Calu3 (cell line): ENCODE measurements at regions of chr6 and their contacts with region 1.

Region 1: DNA sequence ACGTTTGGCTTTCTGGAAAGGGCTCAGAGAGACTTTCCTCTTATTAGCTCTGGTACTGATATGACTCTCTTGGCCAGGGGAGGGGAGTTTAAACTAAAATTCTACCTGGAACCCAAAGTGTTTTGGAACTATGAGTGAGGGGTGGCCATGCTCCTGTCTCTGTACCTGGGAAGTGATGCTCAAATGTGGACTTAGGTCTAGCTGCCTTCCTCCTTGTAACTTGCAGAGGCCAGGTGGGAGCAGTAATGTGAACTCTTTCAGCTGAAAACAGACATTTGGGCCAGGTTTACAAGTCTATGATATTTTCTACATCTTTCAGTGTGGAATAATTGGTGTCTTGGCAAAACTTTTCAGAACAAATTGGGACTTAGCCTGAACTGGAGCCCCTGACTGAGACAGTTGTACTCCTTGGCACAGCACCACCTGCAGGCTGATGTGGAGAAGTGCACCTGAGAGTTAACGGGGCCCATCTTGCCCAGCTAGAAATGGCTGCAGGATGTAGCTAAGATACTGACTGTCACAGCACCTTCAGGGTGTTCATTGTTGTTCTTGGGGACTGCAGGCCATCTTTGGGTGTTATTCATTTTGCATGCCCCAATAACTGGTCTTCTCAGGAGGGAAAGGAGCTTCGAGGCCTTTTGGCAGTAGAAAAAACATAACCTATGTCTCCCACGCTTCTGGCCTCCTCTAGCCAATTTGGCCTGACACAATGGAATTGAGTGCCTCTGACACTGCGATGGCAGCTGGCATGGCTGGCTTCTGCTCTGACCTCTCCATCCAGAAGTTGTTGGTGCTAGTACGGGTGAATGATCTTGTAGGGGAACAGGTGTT is 37.1 kb downstream of the CD109 start:
- DNase-seq: peak; percentile 78
- H3K4me3 Mint-ChIP-seq: no peak overlapping the region
- H3K27ac Mint-ChIP-seq: no peak overlapping the region
- H3K4me1 Mint-ChIP-seq: no peaks in the 10 kb centered on the region
- H3K27me3 Mint-ChIP-seq: no peaks in the 10 kb centered on the region
- CTCF ChIP-seq: peak; percentile 78

Region 2: GRCh38 chr6:73675466-73676098 is 57.5 kb before region 1 on chr6:
- CTCF ChIA-PET with region 1: interaction called, 16 read pairs
- intact Hi-C with region 1: loop called (anchors 1 kb)
- DNase-seq: peak; percentile 85
- H3K4me3 Mint-ChIP-seq: no peak overlapping the region
- H3K27ac Mint-ChIP-seq: no peak overlapping the region
- H3K4me1 Mint-ChIP-seq: peaks cover 19% of the 10 kb centered on the region
- H3K27me3 Mint-ChIP-seq: no peaks in the 10 kb centered on the region
- CTCF ChIP-seq: peak; percentile 92

Region 3: DNA sequence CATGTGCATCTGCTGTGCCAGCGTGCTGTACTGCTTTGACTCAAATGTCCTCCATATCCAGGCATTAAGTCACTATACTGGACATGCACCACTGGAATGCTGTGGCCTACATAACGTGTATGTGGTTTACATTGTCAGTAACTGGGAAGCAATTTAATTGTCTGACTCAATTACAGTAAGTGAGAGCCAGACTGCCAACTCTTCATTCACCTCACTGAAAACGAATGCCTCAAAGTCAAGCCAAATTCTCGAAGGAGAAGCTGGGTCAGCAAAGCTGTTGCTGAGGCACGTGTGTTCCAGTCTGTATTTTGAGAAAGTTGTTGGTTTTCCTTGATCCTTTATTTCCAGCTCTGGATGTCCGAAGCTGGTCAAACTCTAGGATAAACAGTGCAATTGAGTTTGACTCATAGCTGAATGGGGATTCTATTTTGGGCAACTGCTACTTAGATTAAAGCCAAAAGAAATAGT is 938.5 kb after region 1 on chr6:
- CTCF ChIA-PET with region 1: no interaction called
- intact Hi-C with region 1: no loop called
- DNase-seq: no peak
- H3K4me3 Mint-ChIP-seq: no peak overlapping the region
- H3K27ac Mint-ChIP-seq: no peak overlapping the region
- H3K4me1 Mint-ChIP-seq: no peaks in the 10 kb centered on the region
- H3K27me3 Mint-ChIP-seq: no peaks in the 10 kb centered on the region
- CTCF ChIP-seq: no peak